Posterior vena cava (tissue), 2 donors: ENCODE measurements at regions of chr7 and their contacts with region 1.

Region 1: DNA sequence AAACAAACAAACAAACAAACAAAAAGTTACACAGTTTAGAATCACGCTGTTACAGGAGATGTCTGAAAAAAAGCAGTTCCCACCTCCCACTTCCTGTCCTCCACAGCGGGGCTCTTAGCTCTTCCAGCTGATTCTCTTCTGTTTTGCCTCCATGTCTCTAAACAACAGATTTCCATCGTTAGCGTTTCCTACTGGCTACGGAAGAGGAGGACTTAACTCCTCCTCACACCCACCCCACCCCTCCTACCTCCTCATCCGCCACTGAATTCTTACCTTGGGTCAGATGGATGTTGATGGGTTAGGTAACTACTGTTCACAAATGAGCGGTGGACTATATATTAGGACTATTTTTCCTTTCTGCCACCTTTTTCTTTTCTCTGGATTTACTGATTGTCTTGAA is 36.8 kb upstream of the NUB1 start:
- DNase-seq: peak; percentile 1

Region 2: GRCh38 chr7:151123822-151124464 is 180.9 kb before region 1 on chr7:
- intact Hi-C with region 1: loop called in 1 of 2 experiments (anchors 5 kb)
- DNase-seq: peak; percentile 94

Region 3: DNA sequence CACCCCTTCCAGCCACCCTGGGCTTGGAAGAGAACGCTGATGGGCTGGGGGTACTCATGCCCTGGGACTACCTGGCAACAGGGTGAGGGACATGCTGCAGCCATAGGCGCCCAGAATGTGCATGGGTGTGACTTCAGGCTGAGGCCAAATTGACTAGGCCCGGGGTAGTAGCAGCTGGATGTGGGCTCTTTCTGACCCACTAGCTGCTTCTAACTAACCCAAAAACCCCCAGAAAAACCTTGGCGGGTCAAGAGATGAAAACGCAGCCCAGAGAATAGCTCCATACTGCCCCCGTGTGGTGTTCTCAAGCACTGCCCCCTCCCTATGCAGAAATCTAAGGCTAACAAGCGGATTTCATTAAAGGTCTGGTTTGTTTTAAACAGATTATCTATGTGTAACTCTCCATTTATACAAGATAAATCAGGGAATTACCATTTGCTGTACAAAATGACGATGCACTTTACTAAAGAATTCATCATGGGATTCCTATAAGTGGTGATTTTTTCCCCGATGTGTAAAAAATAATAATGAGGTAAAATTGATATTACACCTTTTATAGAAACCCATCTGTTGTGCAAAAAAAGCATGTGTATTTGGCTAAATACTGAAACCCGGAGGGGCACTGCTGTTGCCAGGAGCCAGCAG is 60.5 kb before region 1 on chr7:
- intact Hi-C with region 1: loop called (anchors 5 to 10 kb)
- DNase-seq: peak; percentile 77

Region 4: GRCh38 chr7:151439855-151440798 is 135.3 kb after region 1 on chr7 and contains the start of gene CRYGN:
- intact Hi-C with region 1: no loop called
- DNase-seq: no peak
- total RNA-seq, gene CRYGN: 0.42 to 1.1 TPM

Region 5: GRCh38 chr7:151503902-151504714 is 199.3 kb after region 1 on chr7:
- intact Hi-C with region 1: no loop called
- DNase-seq: no peak